ENCODE measurements at regions of chr5 and their contacts with region 1.

Region 1: GRCh38 chr5:79857714-79858409 is 133.2 kb downstream of the MTX3 start:
- DNase-seq: peak; percentile 71 to 85
- ATAC-seq: peak; percentile 74 to 83 (median 78)
- H3K4me3 ChIP-seq: no peak overlapping the region
- H3K27ac ChIP-seq: no peak overlapping the region
- H3K4me1 ChIP-seq: no peaks in the 10 kb centered on the region
- H3K27me3 ChIP-seq: no peaks in the 10 kb centered on the region
- CTCF ChIP-seq: peak; percentile 98

Region 2: DNA sequence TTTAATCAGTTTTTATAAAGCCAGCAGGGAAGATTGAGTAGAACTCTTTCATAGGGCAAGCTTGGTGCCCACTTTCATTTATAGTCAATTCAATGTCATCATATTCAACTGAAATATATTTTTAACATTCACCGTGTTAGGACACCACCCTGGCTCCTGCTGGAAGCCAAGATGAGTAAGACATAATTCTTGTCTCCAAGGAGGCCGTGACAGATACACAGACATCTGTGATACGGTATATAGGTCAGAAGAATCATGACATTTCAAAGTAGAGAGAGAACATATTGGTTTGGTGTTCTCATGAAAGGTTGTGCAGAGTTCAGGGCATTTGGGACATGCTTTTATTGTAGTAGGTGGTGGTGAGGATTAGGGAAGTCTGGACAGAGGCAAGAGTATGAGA is 48.1 kb before region 1 on chr5:
- intact Hi-C with region 1: loop called in 1 of 2 experiments (anchors 1 kb)
- DNase-seq: no peak
- ATAC-seq: peak; percentile 83 to 94 (median 90)
- H3K4me3 ChIP-seq: no peak overlapping the region
- H3K27ac ChIP-seq: peak overlapping the region; percentile 77
- H3K4me1 ChIP-seq: peaks cover 51% of the 10 kb centered on the region
- H3K27me3 ChIP-seq: no peaks in the 10 kb centered on the region
- CTCF ChIP-seq: no peak

Region 3: GRCh38 chr5:80083101-80083890 is 225.4 kb after region 1 on chr5:
- intact Hi-C with region 1: loop called in 1 of 2 experiments (anchors 10 kb)
- DNase-seq: no peak
- ATAC-seq: peak; percentile 79 to 91 (median 86)
- H3K4me3 ChIP-seq: peak overlapping the region; percentile 58
- H3K27ac ChIP-seq: peak overlapping the region; percentile 68
- H3K4me1 ChIP-seq: peaks cover 7% of the 10 kb centered on the region
- H3K27me3 ChIP-seq: no peaks in the 10 kb centered on the region
- CTCF ChIP-seq: peak; percentile 73